Activated CD4-positive, alpha-beta T cell treated with anti-CD3 and anti-CD28 coated beads for 36 hours (primary cell): ENCODE measurements at regions of chr21 and their contacts with region 1.

Region 1: DNA sequence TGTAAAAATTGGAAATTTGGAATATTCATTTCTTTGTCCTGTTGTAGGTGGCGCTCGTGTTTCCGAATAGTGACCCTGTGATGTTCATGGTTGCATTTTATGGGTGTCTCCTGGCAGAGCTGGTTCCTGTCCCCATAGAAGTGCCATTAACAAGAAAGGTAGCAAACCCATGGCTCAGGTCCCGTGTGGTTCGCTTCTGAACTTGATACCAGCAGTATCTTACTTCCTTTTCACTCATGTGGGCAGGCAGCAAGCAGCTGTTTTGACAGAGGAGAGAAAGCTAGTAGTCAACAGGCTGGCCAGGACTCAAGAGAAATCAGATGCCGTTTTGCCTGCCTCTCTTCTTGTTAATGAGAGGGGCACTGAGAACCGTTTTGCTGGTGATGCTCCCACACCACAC is 72.8 kb downstream of the S100B start:
- DNase-seq: no peak
- ATAC-seq: peak; percentile 36
- H3K4me3 Mint-ChIP-seq: no peak overlapping the region
- H3K27ac Mint-ChIP-seq: peak overlapping the region; percentile 64
- H3K4me1 Mint-ChIP-seq: peaks cover 34% of the 10 kb centered on the region
- H3K27me3 Mint-ChIP-seq: no peaks in the 10 kb centered on the region

Region 2: GRCh38 chr21:46486481-46487126 is 45.5 kb before region 1 on chr21:
- CTCF ChIA-PET with region 1: no interaction called
- POLR2A ChIA-PET with region 1: no interaction called
- intact Hi-C with region 1: no loop called
- DNase-seq: no peak
- ATAC-seq: no peak
- H3K4me3 Mint-ChIP-seq: no peak overlapping the region
- H3K27ac Mint-ChIP-seq: no peak overlapping the region
- H3K4me1 Mint-ChIP-seq: peaks cover 15% of the 10 kb centered on the region
- H3K27me3 Mint-ChIP-seq: no peaks in the 10 kb centered on the region

Region 3: GRCh38 chr21:46551636-46552241 is 19.7 kb after region 1 on chr21:
- CTCF ChIA-PET with region 1: interaction called, 14 read pairs
- POLR2A ChIA-PET with region 1: no interaction called
- intact Hi-C with region 1: no loop called
- DNase-seq: peak; percentile 66
- ATAC-seq: peak; percentile 75
- H3K4me3 Mint-ChIP-seq: peak overlapping the region; percentile 55
- H3K27ac Mint-ChIP-seq: peak overlapping the region; percentile 87
- H3K4me1 Mint-ChIP-seq: peaks cover 58% of the 10 kb centered on the region
- H3K27me3 Mint-ChIP-seq: no peaks in the 10 kb centered on the region

Region 4: GRCh38 chr21:46569081-46569480 is 37.0 kb after region 1 on chr21:
- CTCF ChIA-PET with region 1: no interaction called
- POLR2A ChIA-PET with region 1: no interaction called
- intact Hi-C with region 1: loop called in 1 of 2 experiments (anchors 5 kb)
- DNase-seq: no peak
- ATAC-seq: no peak
- H3K4me3 Mint-ChIP-seq: no peak overlapping the region
- H3K27ac Mint-ChIP-seq: no peak overlapping the region
- H3K4me1 Mint-ChIP-seq: peaks cover 15% of the 10 kb centered on the region
- H3K27me3 Mint-ChIP-seq: no peaks in the 10 kb centered on the region

Region 5: DNA sequence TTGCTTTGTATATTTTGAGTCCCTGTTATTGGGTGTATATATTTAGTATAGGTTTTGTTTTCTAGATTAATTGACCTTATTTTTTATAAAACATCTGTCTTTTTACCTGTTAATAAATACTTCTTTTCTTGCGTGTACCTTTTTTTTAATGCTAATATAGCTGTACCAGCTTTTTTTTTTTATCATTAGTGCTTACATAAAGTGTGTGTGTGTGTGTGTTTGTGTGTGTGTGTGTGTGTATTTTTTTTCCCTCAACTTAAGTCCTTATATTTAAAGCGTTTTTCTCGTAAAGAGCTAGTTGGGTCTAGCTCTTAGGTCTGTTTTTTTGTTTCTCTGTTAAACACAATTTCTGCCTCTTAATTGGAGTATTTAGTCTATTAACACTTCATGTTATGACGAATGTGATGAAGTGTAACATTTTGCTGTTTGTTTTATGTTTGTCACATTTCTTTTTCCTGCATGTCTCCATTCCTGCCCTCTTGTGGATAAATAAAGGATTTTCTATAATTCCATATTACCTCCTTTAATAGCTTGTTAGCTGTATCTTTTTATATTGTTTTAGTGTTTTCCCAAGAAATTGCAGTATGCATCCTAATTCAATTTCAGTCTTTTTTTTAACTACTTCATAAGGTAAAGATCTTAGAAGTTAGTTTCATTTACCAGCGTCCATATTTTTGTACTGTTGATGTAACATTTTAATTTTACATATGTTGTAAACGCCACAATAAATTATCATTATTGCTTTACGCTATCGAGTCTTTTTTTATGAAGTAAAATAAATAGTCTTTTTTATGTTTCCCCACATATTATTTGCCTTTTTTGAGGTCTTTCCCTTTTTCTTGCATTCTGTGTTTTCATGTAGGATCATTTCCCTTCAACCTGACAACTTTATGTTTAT is 107.7 kb after region 1 on chr21:
- CTCF ChIA-PET with region 1: no interaction called
- POLR2A ChIA-PET with region 1: no interaction called
- intact Hi-C with region 1: no loop called
- DNase-seq: no peak
- ATAC-seq: no peak
- H3K4me3 Mint-ChIP-seq: peak overlapping the region; percentile 54
- H3K27ac Mint-ChIP-seq: peak overlapping the region; percentile 56
- H3K4me1 Mint-ChIP-seq: peaks cover 56% of the 10 kb centered on the region
- H3K27me3 Mint-ChIP-seq: no peaks in the 10 kb centered on the region